SK-N-SH (cell line): ENCODE measurements at regions of chr16 and their contacts with region 1.

Region 1: GRCh38 chr16:11797166-11797956 is at the start of gene ZC3H7A:
- DNase-seq: peak; percentile 97
- H3K4me3 ChIP-seq: peak within 1 kb of the TSS; percentile 77 to 96
- H3K27ac ChIP-seq: peak within 1 kb of the TSS; percentile 95
- H3K4me1 ChIP-seq: peaks cover 33 to 37% of the 10 kb centered on the region in 2 experiments
- H3K27me3 ChIP-seq: no peaks in the 10 kb centered on the region
- CTCF ChIP-seq: peak; percentile 58
- EP300 ChIP-seq: no peak; a peak in 1 of 4 replicates
- RAD21 ChIP-seq: no peak
- polyA plus RNA-seq, gene ZC3H7A: 31.9 and 38.7 TPM in 2 replicates

Region 2: DNA sequence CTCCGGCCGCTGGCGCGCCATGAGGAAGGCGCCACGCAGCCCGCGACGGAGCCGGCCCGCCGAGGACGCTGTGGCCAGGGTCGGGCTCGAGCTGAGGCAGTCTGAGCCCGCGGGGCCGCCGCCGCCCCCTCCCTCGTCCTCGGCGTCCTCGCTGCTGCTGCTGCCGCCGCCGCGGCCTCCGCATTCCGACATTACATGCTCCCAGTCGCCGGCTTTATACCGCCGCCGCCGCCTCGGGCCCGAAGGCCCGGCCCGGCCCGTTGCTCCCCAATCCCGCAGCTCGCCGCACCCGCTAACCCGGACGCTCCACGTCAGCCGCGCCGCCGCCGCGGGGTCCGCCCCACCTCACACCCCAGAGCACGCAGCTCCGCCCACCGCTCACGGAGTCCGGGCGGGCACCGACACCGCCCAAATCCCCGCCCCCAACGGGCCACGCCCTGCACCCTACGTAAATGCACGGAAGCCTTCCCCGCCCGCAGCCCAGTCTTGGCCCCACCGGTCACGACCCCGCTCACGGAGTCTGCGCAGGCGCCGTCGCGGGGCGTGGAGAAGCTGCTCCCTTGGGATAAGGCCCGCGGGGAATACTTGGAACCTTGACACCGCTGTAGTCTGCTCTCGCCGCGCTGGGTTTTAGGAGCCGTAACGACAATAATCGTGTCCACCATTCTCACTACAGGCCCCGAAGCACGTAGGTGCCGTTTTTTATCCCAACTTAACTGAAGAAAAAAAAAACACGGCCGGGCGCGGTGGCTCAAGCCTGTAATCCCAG is 54.6 kb before region 1 on chr16 and contains the start of gene TXNDC11:
- CTCF ChIA-PET with region 1: interaction called, 20 read pairs
- POLR2A ChIA-PET with region 1: interaction called, 16 read pairs
- DNase-seq: peak; percentile 98
- H3K4me3 ChIP-seq: peak within 1 kb of the TSS; percentile 72 to 87
- H3K27ac ChIP-seq: peak within 1 kb of the TSS; percentile 78 to 88
- H3K4me1 ChIP-seq: peaks cover 6 to 14% of the 10 kb centered on the region in 2 experiments; a peak in 3 of 4 replicates
- H3K27me3 ChIP-seq: no peaks in the 10 kb centered on the region
- CTCF ChIP-seq: no peak
- EP300 ChIP-seq: peak in 1 of 2 experiments; percentile 29; a peak in 1 of 4 replicates
- RAD21 ChIP-seq: no peak
- polyA plus RNA-seq, gene TXNDC11: 37.0 and 39.6 TPM in 2 replicates

Region 3: GRCh38 chr16:11783319-11784037 is 13.9 kb before region 1 on chr16:
- CTCF ChIA-PET with region 1: interaction called, 29 read pairs
- POLR2A ChIA-PET with region 1: interaction called, 10 read pairs
- DNase-seq: no peak
- H3K4me3 ChIP-seq: peak overlapping the region in 1 of 2 experiments; percentile 45; a peak in 3 of 4 replicates
- H3K27ac ChIP-seq: peak overlapping the region; percentile 81 to 96
- H3K4me1 ChIP-seq: peaks cover 25 to 30% of the 10 kb centered on the region in 2 experiments
- H3K27me3 ChIP-seq: no peaks in the 10 kb centered on the region
- CTCF ChIP-seq: no peak
- EP300 ChIP-seq: no peak
- RAD21 ChIP-seq: no peak

Region 4: GRCh38 chr16:11857161-11857560 is 59.8 kb after region 1 on chr16:
- CTCF ChIA-PET with region 1: no interaction called
- POLR2A ChIA-PET with region 1: no interaction called
- DNase-seq: no peak
- H3K4me3 ChIP-seq: no peak overlapping the region
- H3K27ac ChIP-seq: no peak overlapping the region; a peak in 1 of 4 replicates
- H3K4me1 ChIP-seq: no peaks in the 10 kb centered on the region; a peak in 1 of 4 replicates
- H3K27me3 ChIP-seq: no peaks in the 10 kb centered on the region
- CTCF ChIP-seq: no peak
- EP300 ChIP-seq: no peak
- RAD21 ChIP-seq: no peak

Region 5: DNA sequence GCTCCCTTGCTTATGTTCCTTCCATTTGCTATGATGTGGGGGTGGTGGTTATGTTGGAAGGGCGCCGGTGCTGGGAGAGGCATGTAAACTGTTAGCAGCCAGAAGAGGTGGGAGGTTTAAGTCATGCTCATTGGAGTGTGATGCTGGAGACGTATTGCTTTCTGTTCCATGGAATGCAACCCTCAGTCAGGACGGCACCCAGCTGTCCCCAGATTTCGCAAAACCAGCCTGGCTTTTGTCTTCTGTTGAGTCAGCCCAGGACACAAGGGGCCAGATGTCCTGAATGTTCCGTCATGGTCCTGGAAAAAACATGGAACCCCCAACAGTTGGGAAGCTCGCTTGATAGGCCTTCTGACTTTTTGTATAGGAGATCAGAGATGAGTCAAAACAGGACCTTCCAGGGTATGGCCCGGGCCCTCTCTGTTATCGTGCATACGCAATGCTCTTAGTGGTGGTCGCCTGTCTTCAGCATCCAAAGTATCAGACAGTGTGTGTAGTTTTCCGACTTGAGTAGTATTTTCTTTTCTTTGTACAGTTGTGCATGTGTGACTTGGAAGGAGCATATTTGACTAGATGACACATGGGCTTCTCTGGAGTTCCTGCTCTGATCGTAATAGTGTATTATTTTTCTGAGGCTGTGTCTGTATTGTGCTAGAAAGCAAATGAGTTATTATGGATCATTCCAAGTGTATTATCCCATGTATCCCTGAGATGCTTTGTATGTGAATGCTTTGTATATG is 381.1 kb after region 1 on chr16:
- CTCF ChIA-PET with region 1: no interaction called
- POLR2A ChIA-PET with region 1: no interaction called
- DNase-seq: no peak
- H3K4me3 ChIP-seq: no peak overlapping the region
- H3K27ac ChIP-seq: no peak overlapping the region
- H3K4me1 ChIP-seq: no peaks in the 10 kb centered on the region
- H3K27me3 ChIP-seq: no peaks in the 10 kb centered on the region
- CTCF ChIP-seq: no peak
- EP300 ChIP-seq: no peak
- RAD21 ChIP-seq: no peak